CD14-positive monocyte (primary cell): ENCODE measurements at regions of chrX and their contacts with region 1.

Region 1: GRCh38 chrX:2875798-2876399 is 47.2 kb downstream of the GYG2 start:
- DNase-seq: peak; percentile 15 to 23 (median 18)
- H3K4me3 ChIP-seq: no peak overlapping the region
- H3K4me3 Mint-ChIP-seq: no peak overlapping the region
- H3K27ac ChIP-seq: no peak overlapping the region
- H3K27ac Mint-ChIP-seq: peak overlapping the region in 1 of 7 donors; percentile 16
- H3K4me1 ChIP-seq: no peaks in the 10 kb centered on the region
- H3K4me1 Mint-ChIP-seq: no peaks in the 10 kb centered on the region
- H3K27me3 ChIP-seq: peaks cover 0 to 2% of the 10 kb centered on the region in 2 donors
- H3K27me3 Mint-ChIP-seq: peaks cover 0 to 13% (median 0%) of the 10 kb centered on the region in 3 donors
- CTCF ChIP-seq: peak; percentile 56

Region 2: GRCh38 chrX:2841537-2841936 is 34.4 kb before region 1 on chrX:
- intact Hi-C with region 1: no loop called
- DNase-seq: no peak
- H3K4me3 ChIP-seq: no peak overlapping the region
- H3K4me3 Mint-ChIP-seq: no peak overlapping the region
- H3K27ac ChIP-seq: no peak overlapping the region
- H3K27ac Mint-ChIP-seq: no peak overlapping the region
- H3K4me1 ChIP-seq: no peaks in the 10 kb centered on the region
- H3K4me1 Mint-ChIP-seq: no peaks in the 10 kb centered on the region
- H3K27me3 ChIP-seq: no peaks in the 10 kb centered on the region
- H3K27me3 Mint-ChIP-seq: peaks cover 0 to 9% (median 0%) of the 10 kb centered on the region in 3 donors
- CTCF ChIP-seq: no peak

Region 3: GRCh38 chrX:3037218-3037617 is 161.3 kb after region 1 on chrX:
- intact Hi-C with region 1: loop called in 1 of 2 experiments (anchors 10 kb)
- DNase-seq: no peak
- H3K4me3 ChIP-seq: no peak overlapping the region
- H3K4me3 Mint-ChIP-seq: no peak overlapping the region
- H3K27ac ChIP-seq: no peak overlapping the region
- H3K27ac Mint-ChIP-seq: no peak overlapping the region
- H3K4me1 ChIP-seq: no peaks in the 10 kb centered on the region
- H3K4me1 Mint-ChIP-seq: no peaks in the 10 kb centered on the region
- H3K27me3 ChIP-seq: no peaks in the 10 kb centered on the region
- H3K27me3 Mint-ChIP-seq: peaks cover 0 to 4% (median 0%) of the 10 kb centered on the region in 3 donors
- CTCF ChIP-seq: no peak